ENCODE measurements at regions of chr7 and their contacts with region 1.

Region 1: DNA sequence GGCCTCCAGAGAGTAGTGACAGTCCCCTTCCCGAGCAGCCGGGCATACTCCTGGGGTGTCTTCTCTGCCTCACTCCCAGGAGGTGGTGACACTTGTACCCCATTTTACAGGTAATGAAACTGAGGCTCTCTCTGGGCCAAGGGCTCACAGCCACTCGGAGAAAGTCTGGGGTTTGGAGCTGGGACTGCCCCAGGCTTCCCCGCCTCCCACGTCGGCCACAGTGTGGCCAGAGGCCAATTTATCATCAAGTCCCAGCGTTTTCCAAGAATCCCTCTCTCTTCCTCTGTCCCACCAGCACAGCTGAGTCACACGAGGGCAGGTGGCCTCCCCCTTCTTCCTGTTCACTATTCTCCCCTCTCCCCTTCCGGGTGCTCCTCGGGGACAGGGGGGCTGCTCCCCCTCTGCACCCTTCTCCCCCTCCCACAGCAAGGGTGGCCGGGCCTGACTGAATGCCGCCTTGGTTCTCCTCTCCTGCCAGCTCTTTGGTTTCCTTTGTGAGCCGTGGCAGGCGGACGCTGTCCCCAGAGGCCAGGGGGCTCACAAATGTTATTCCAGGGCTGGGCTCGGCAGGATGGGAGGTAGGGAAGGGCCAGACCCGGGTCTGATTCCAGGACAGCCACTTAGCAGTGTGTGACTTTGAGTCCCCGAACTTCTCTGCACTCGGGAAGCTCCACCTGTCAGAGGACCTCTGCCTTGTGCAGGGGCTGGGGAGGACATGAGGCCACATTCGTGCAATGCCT is 17.7 kb downstream of the CLIP2 start:
- DNase-seq: peak in 1 of 9 experiments; percentile 7
- ATAC-seq: peak; percentile 58
- H3K4me3 ChIP-seq: peak overlapping the region; percentile 12 to 18
- H3K4me3 Mint-ChIP-seq: peak overlapping the region; percentile 72
- H3K27ac ChIP-seq: no peak overlapping the region
- H3K27ac Mint-ChIP-seq: no peak overlapping the region
- H3K4me1 ChIP-seq: peaks cover 16% of the 10 kb centered on the region
- H3K4me1 Mint-ChIP-seq: peaks cover 13% of the 10 kb centered on the region
- H3K27me3 ChIP-seq: peaks cover 0 to 4% of the 10 kb centered on the region in 2 experiments
- H3K27me3 Mint-ChIP-seq: peaks cover 3% of the 10 kb centered on the region
- CTCF ChIP-seq: no peak

Region 2: GRCh38 chr7:74212656-74213055 is 94.2 kb before region 1 on chr7:
- CTCF ChIA-PET with region 1: no interaction called
- POLR2A ChIA-PET with region 1: no interaction called
- intact Hi-C with region 1: loop called in 1 of 2 experiments (anchors 5 kb)
- DNase-seq: no peak
- ATAC-seq: no peak
- H3K4me3 ChIP-seq: no peak overlapping the region
- H3K4me3 Mint-ChIP-seq: no peak overlapping the region
- H3K27ac ChIP-seq: no peak overlapping the region
- H3K27ac Mint-ChIP-seq: no peak overlapping the region
- H3K4me1 ChIP-seq: peaks cover 11% of the 10 kb centered on the region
- H3K4me1 Mint-ChIP-seq: peaks cover 15% of the 10 kb centered on the region
- H3K27me3 ChIP-seq: no peaks in the 10 kb centered on the region
- H3K27me3 Mint-ChIP-seq: peaks cover 6% of the 10 kb centered on the region
- CTCF ChIP-seq: no peak

Region 3: DNA sequence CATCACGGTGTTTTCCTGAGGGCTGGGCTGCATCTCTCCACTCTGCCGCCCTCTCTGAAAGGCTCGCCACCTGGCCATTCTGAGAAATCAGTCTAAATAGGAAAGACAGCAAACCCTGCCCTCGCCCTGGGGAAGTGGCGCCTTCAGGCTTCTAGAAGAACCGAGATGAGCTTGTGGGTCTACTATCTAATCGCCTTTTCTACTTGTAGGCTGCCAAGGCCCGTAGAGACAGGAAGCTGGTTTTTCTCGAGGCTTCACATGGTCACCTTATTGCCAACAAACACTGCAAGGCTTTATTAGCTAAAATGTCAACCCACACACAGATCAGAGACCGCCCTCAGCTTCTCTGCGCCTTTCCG is 75.7 kb before region 1 on chr7:
- CTCF ChIA-PET with region 1: no interaction called
- POLR2A ChIA-PET with region 1: no interaction called
- intact Hi-C with region 1: no loop called
- DNase-seq: peak in 3 of 9 experiments; percentile 22 to 70 (median 49)
- ATAC-seq: no peak
- H3K4me3 ChIP-seq: no peak overlapping the region
- H3K4me3 Mint-ChIP-seq: no peak overlapping the region
- H3K27ac ChIP-seq: peak overlapping the region in 1 of 2 experiments; percentile 66
- H3K27ac Mint-ChIP-seq: peak overlapping the region; percentile 27
- H3K4me1 ChIP-seq: no peaks in the 10 kb centered on the region
- H3K4me1 Mint-ChIP-seq: peaks cover 2% of the 10 kb centered on the region
- H3K27me3 ChIP-seq: no peaks in the 10 kb centered on the region
- H3K27me3 Mint-ChIP-seq: no peaks in the 10 kb centered on the region
- CTCF ChIP-seq: no peak